Activated naive CD4-positive, alpha-beta T cell treated with anti-CD3 and anti-CD28 coated beads, Interleukin-2, amount 10 ng/mL, durations not matched to agents 7 days and 5 days (primary cell): ENCODE measurements at regions of chr11 and their contacts with region 1.

Region 1: GRCh38 chr11:35822815-35823495 is 120.9 kb upstream of the LDLRAD3 start:
- DNase-seq: no peak
- H3K4me3 Mint-ChIP-seq: no peak overlapping the region
- H3K27ac Mint-ChIP-seq: no peak overlapping the region
- H3K4me1 Mint-ChIP-seq: peaks cover 10% of the 10 kb centered on the region
- H3K27me3 Mint-ChIP-seq: peaks cover 11% of the 10 kb centered on the region

Region 2: DNA sequence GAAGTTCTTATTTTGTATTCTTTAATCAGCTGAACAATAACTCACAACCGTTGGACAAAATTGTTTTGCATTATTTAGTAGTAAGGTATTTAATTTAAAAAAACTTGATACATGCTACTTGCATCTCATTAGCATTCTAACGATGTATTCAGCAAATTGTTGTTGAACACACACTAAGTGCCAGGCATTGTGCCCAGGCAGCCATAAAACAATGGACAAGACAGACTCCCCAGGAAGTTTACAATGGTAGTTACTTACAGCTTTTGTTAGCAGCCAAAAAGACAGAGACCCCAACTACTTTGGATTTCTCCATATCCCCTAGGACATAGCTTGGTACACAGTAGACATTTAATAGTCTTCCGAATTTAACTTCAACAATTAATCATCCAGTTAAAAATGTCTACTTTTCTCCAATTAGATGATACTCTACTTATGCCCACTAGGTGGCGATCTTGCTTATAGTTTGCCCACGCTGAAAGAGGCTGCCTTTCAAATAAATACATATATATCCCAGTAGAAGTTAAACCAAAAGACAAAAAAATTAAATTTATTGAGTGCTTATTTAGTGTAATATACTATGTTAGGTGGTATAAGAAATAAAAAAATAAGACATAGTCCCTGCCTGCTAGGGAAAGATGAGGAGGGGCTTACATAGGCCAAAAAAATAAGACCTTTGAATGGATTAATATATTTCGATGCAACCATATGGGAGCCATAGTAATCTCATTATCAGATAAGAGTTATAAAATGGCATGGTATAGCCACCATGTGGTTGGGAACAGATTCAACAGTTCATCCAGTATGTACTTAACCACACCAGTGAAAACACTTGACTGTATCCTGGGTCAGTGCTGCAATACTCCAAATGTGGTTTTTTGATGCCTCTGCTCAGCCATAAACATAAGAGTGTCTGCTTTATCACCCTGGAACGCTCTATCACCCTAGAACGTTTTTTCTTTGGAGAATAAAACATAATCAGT is 206.7 kb before region 1 on chr11:
- CTCF ChIA-PET with region 1: interaction called, 16 read pairs
- DNase-seq: peak; percentile 25
- H3K4me3 Mint-ChIP-seq: no peak overlapping the region
- H3K27ac Mint-ChIP-seq: no peak overlapping the region
- H3K4me1 Mint-ChIP-seq: peaks cover 13% of the 10 kb centered on the region
- H3K27me3 Mint-ChIP-seq: peaks cover 47% of the 10 kb centered on the region

Region 3: DNA sequence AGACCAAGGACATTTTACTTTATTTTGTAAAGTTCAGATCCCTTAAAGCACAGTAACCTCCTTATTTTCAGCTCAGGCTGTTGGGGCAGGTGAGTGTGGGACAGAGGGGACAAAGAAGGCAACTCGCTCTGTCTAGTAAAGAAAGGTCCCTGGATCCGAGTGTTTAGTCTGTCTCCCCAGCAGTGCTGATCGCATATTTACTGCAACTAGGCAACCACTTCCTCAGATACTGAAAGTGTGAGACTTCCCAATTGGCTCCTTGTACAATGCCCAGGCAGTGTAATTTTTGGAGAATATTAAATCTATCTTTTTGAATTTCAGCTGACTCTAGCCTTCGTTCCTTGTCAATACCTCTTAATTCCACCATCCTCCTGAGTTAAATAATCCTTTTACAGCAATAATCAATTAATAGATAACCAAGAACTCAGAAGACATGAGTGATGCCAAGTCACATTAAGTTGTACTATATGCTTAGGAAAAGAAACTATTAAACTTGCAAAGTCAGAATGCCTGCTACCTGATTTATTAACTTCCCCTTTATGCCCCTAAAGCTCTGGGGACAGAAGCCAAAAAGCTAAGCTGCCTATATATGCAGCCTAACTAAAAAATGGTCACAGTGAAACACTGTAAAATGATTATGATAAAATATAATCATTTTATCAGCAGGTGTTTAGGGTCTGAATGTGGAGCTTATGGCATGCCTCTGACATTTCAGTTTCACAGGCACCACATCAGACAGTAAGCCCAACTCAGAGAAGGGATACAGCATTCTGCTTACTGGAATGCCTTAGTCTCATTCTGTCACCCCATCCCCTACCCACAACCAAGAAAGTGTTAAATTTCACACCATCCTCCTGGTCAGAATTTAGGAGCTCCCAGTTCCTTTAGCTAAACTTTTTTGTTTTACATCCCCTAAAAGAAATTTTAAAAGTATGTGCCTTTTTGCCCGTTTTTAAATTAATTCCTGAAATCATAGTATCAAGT is 21.7 kb before region 1 on chr11:
- CTCF ChIA-PET with region 1: interaction called, 12 read pairs
- DNase-seq: no peak
- H3K4me3 Mint-ChIP-seq: no peak overlapping the region
- H3K27ac Mint-ChIP-seq: no peak overlapping the region
- H3K4me1 Mint-ChIP-seq: peaks cover 8% of the 10 kb centered on the region
- H3K27me3 Mint-ChIP-seq: no peaks in the 10 kb centered on the region

Region 4: GRCh38 chr11:35811775-35812174 is 11.2 kb before region 1 on chr11:
- CTCF ChIA-PET with region 1: interaction called, 19 read pairs
- DNase-seq: no peak
- H3K4me3 Mint-ChIP-seq: no peak overlapping the region
- H3K27ac Mint-ChIP-seq: no peak overlapping the region
- H3K4me1 Mint-ChIP-seq: no peaks in the 10 kb centered on the region
- H3K27me3 Mint-ChIP-seq: no peaks in the 10 kb centered on the region

Region 5: GRCh38 chr11:36002196-36002595 is 179.2 kb after region 1 on chr11:
- CTCF ChIA-PET with region 1: no interaction called
- DNase-seq: no peak
- H3K4me3 Mint-ChIP-seq: no peak overlapping the region
- H3K27ac Mint-ChIP-seq: no peak overlapping the region
- H3K4me1 Mint-ChIP-seq: no peaks in the 10 kb centered on the region
- H3K27me3 Mint-ChIP-seq: peaks cover 21% of the 10 kb centered on the region

Region 6: GRCh38 chr11:36265793-36266628 is 443.1 kb after region 1 on chr11:
- CTCF ChIA-PET with region 1: interaction called, 24 read pairs
- DNase-seq: peak; percentile 68
- H3K4me3 Mint-ChIP-seq: no peak overlapping the region
- H3K27ac Mint-ChIP-seq: no peak overlapping the region
- H3K4me1 Mint-ChIP-seq: no peaks in the 10 kb centered on the region
- H3K27me3 Mint-ChIP-seq: peaks cover 25% of the 10 kb centered on the region